Cardiac septum (tissue), 1 donor: ENCODE measurements at regions of chr13 and their contacts with region 1.

Region 1: GRCh38 chr13:79775830-79776229 is 294.9 kb downstream of the NDFIP2 start:
- DNase-seq: no peak

Region 2: GRCh38 chr13:79267560-79267959 is 508.3 kb before region 1 on chr13:
- intact Hi-C with region 1: no loop called
- DNase-seq: no peak

Region 3: GRCh38 chr13:80363890-80364503 is 588.2 kb after region 1 on chr13:
- intact Hi-C with region 1: loop called (anchors 10 kb)
- DNase-seq: no peak